HCT116 (cell line): ENCODE measurements at regions of chr6 and their contacts with region 1.

Region 1: DNA sequence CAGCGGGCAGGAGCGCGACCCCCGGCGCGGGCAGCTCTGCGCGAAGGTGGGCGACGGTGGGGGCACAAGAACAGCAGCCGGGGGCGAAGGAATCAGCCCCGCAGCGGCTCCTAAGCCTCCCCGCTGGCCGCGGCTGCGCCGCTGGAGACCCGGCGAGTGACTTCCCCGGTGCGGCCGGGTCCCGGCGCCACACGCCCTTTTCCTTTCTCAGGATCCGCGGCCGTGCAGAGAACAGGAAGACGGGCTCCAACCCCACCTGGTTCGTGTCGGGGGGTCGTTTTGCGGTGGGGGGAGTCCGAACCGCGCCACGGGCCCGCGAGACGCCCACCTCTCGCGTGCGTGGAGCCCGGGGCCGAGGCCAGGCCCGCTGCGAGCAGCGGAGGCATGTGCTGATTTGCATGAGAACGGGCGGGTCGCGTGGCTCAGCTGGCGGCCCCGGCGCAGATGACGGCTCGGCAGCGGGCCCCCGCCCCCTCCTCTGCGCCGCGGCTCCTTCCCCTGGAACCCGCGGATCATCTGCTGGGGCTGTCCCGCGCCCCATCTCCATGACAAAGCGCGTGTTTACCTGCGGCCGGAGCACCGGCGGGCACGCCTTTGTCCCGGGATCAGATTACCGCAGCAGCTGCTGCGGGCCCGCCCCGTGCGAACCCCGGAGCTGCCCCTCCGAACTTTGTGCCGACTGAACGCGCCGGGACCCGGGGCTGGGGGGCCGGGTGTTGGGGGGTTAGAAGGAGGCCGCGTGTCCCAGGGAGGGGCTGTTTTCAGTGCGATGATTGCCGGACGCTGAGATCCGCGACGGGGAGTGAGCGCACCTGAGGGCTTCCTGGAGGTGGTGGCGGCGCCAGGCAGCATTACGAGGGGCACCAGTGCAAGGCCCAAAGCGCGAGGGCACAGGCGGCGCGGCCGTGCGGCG is 4.9 kb upstream of the DLL1 start:
- DNase-seq: no peak
- ATAC-seq: peak; percentile 73
- H3K4me3 ChIP-seq: peak overlapping the region; percentile 35 to 59
- H3K27ac ChIP-seq: peak overlapping the region; percentile 22; the same call in 1 of the 2 replicates
- H3K4me1 ChIP-seq: peaks cover 4 to 14% of the 10 kb centered on the region in 2 experiments; a peak in 2 of 4 replicates
- H3K27me3 ChIP-seq: peaks cover 4% of the 10 kb centered on the region; the same call in 1 of the 2 replicates
- CTCF ChIP-seq: no peak
- POLR2A ChIP-seq: no peak
- RAD21 ChIP-seq: no peak

Region 2: GRCh38 chr6:169831450-169832246 is 464.1 kb before region 1 on chr6:
- CTCF ChIA-PET with region 1: interaction called, 14 read pairs
- POLR2A ChIA-PET with region 1: no interaction called
- RAD21 ChIA-PET with region 1: no interaction called
- intact Hi-C with region 1: loop called (anchors 2 kb)
- DNase-seq: peak; percentile 38
- ATAC-seq: peak; percentile 98
- H3K4me3 ChIP-seq: no peak overlapping the region
- H3K27ac ChIP-seq: no peak overlapping the region
- H3K4me1 ChIP-seq: peaks cover 0 to 6% of the 10 kb centered on the region in 2 experiments; a peak in 1 of 4 replicates
- H3K27me3 ChIP-seq: peaks cover 5% of the 10 kb centered on the region; the same call in 1 of the 2 replicates
- CTCF ChIP-seq: peak; percentile 84 to 97 (median 89)
- POLR2A ChIP-seq: no peak
- RAD21 ChIP-seq: peak; percentile 90

Region 3: DNA sequence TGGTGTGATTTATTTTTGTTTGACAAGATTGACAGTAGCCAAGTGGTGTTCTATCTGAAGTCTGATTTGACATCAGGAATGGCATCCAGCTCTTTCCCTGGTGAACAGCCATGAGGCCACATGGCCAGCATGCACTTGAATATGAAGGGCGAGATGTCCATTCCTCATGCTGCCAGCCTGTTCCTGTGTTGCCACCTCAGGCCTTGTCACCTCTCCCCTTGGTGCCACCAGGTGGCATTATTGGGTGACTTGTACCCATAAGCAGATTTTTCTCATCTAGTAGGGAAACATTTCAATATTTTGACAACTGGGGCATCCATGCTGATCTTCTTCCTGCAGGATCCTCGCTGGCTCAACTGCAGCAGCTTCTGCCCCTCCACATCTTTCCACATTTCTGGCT is 345.2 kb before region 1 on chr6:
- CTCF ChIA-PET with region 1: interaction called, 3 read pairs
- POLR2A ChIA-PET with region 1: no interaction called
- RAD21 ChIA-PET with region 1: interaction called in 1 of 2 experiments, 5 read pairs
- intact Hi-C with region 1: loop called (anchors 2 kb)
- DNase-seq: peak; percentile 32
- ATAC-seq: peak; percentile 84
- H3K4me3 ChIP-seq: no peak overlapping the region
- H3K27ac ChIP-seq: no peak overlapping the region
- H3K4me1 ChIP-seq: no peaks in the 10 kb centered on the region
- H3K27me3 ChIP-seq: no peaks in the 10 kb centered on the region
- CTCF ChIP-seq: peak; percentile 51 to 63 (median 57); a peak in 5 of 6 replicates
- POLR2A ChIP-seq: no peak
- RAD21 ChIP-seq: peak; percentile 80